Left lung (tissue), 14 donors: ENCODE measurements at regions of chr4 and their contacts with region 1.

Region 1: GRCh38 chr4:73593631-73594241 is 26.5 kb downstream of the RASSF6 start:
- DNase-seq: no peak
- ATAC-seq: no peak
- H3K4me3 ChIP-seq: no peak overlapping the region
- H3K27ac ChIP-seq: no peak overlapping the region
- H3K4me1 ChIP-seq: peaks cover 0 to 4% of the 10 kb centered on the region in 2 donors
- H3K27me3 ChIP-seq: no peaks in the 10 kb centered on the region
- CTCF ChIP-seq: peak; percentile 16 to 31

Region 2: GRCh38 chr4:73653695-73654106 is 60.0 kb after region 1 on chr4:
- intact Hi-C with region 1: loop called in 1 of 2 experiments (anchors 10 kb)
- DNase-seq: peak in 2 of 4 donors; percentile 64 to 71
- ATAC-seq: peak; percentile 93
- H3K4me3 ChIP-seq: no peak overlapping the region
- H3K27ac ChIP-seq: no peak overlapping the region
- H3K4me1 ChIP-seq: no peaks in the 10 kb centered on the region
- H3K27me3 ChIP-seq: no peaks in the 10 kb centered on the region
- CTCF ChIP-seq: peak; percentile 20 to 56

Region 3: DNA sequence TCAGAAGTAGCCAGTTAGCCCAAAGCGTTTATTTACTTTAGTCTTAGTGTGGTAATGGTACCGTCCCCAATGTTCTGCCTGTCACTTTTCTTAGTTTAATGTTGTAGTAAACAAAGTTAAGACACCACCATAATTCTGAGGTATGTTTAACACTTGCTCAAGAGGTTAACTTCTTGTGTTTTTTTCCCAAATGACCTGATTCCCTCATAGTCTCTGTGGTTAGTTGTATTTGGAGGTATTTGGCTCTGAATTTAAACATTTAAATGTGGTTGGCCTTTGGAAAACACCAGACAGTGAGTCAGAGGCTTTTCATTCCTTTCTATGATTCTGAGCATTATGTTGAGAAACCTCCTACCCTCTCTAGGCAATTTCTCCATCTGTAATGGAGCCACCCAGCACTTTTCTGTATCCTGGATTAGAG is 323.4 kb after region 1 on chr4:
- intact Hi-C with region 1: no loop called
- DNase-seq: no peak
- ATAC-seq: peak; percentile 83
- H3K4me3 ChIP-seq: no peak overlapping the region
- H3K27ac ChIP-seq: no peak overlapping the region
- H3K4me1 ChIP-seq: no peaks in the 10 kb centered on the region
- H3K27me3 ChIP-seq: no peaks in the 10 kb centered on the region
- CTCF ChIP-seq: no peak